ENCODE measurements at regions of chr6 and their contacts with region 1.

Region 1: GRCh38 chr6:27146706-27147505 is 100.6 kb upstream of the PRSS16 start:
- DNase-seq: peak; percentile 99
- ATAC-seq: peak; percentile 71
- H3K4me3 ChIP-seq: peak overlapping the region; percentile 69 to 70
- H3K27ac ChIP-seq: peak overlapping the region; percentile 97
- H3K4me1 ChIP-seq: peaks cover 26 to 55% of the 10 kb centered on the region in 2 experiments
- H3K27me3 ChIP-seq: no peaks in the 10 kb centered on the region
- CTCF ChIP-seq: no peak
- POLR2A ChIP-seq: peak; percentile 93
- RAD21 ChIP-seq: no peak

Region 2: GRCh38 chr6:26183581-26184366 is 963.1 kb before region 1 on chr6:
- CTCF ChIA-PET with region 1: no interaction called
- POLR2A ChIA-PET with region 1: interaction called, 13 read pairs
- RAD21 ChIA-PET with region 1: no interaction called
- intact Hi-C with region 1: no loop called
- DNase-seq: no peak
- ATAC-seq: no peak
- H3K4me3 ChIP-seq: no peak overlapping the region
- H3K27ac ChIP-seq: no peak overlapping the region
- H3K4me1 ChIP-seq: peaks cover 3 to 14% of the 10 kb centered on the region in 2 experiments; a peak in 3 of 4 replicates
- H3K27me3 ChIP-seq: no peaks in the 10 kb centered on the region
- CTCF ChIP-seq: no peak
- POLR2A ChIP-seq: no peak
- RAD21 ChIP-seq: no peak

Region 3: DNA sequence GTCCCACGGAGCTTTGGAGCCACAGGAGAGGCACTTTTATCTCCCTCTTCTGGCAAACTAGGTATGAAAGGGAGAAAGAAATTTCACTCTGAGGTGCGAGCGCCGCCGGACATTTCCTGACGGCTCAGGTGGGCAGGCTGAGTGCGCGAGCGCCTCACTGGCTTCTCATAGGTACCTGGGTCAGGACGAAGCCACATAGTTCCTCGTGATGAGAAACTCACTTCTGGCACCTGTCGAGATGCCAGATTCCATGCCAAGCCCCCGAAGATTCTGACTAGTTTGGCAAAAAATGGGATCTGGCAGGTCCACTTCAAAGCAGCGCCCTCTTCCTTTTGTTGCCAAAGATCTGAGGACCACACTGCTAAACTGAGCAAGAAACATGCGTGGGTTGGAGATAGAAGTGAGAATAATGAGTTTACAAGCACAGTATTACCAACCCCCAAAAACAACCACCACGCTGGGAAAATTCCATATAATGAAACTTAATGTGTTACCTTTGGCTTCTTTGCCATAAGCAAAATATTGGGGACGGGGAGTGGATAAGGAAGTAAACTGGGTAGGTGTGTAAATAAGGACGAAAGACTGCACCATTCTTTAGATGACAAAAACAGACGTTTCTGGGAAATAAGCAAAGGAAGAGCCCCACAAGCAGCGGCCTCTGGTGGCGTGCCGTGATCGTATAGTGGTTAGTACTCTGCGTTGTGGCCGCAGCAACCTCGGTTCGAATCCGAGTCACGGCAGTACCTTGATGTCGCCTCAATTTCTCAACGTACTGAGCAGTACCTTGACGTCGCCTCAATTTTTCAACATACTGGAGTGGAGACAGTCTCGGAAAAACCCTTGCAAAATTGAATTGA is 10.8 kb after region 1 on chr6:
- CTCF ChIA-PET with region 1: interaction called, 3 read pairs
- POLR2A ChIA-PET with region 1: interaction called, 10 read pairs
- RAD21 ChIA-PET with region 1: no interaction called
- intact Hi-C with region 1: no loop called
- DNase-seq: peak; percentile 65
- ATAC-seq: peak; percentile 87
- H3K4me3 ChIP-seq: peak overlapping the region; percentile 39 to 52
- H3K27ac ChIP-seq: peak overlapping the region; percentile 57
- H3K4me1 ChIP-seq: peaks cover 4 to 41% of the 10 kb centered on the region in 2 experiments; a peak in 3 of 4 replicates
- H3K27me3 ChIP-seq: no peaks in the 10 kb centered on the region
- CTCF ChIP-seq: peak; percentile 44 to 59 (median 56); a peak in 5 of 6 replicates
- POLR2A ChIP-seq: no peak
- RAD21 ChIP-seq: peak; percentile 49

Region 4: GRCh38 chr6:27809939-27810767 is 663.2 kb after region 1 on chr6:
- CTCF ChIA-PET with region 1: no interaction called
- POLR2A ChIA-PET with region 1: interaction called, 155 read pairs
- RAD21 ChIA-PET with region 1: no interaction called
- intact Hi-C with region 1: loop called (anchors 5 kb)
- DNase-seq: peak; percentile 97
- ATAC-seq: peak; percentile 43
- H3K4me3 ChIP-seq: peak overlapping the region; percentile 59 to 69
- H3K27ac ChIP-seq: peak overlapping the region; percentile 88
- H3K4me1 ChIP-seq: peaks cover 36 to 64% of the 10 kb centered on the region in 2 experiments
- H3K27me3 ChIP-seq: no peaks in the 10 kb centered on the region
- CTCF ChIP-seq: no peak
- POLR2A ChIP-seq: peak; percentile 92
- RAD21 ChIP-seq: no peak

Region 5: DNA sequence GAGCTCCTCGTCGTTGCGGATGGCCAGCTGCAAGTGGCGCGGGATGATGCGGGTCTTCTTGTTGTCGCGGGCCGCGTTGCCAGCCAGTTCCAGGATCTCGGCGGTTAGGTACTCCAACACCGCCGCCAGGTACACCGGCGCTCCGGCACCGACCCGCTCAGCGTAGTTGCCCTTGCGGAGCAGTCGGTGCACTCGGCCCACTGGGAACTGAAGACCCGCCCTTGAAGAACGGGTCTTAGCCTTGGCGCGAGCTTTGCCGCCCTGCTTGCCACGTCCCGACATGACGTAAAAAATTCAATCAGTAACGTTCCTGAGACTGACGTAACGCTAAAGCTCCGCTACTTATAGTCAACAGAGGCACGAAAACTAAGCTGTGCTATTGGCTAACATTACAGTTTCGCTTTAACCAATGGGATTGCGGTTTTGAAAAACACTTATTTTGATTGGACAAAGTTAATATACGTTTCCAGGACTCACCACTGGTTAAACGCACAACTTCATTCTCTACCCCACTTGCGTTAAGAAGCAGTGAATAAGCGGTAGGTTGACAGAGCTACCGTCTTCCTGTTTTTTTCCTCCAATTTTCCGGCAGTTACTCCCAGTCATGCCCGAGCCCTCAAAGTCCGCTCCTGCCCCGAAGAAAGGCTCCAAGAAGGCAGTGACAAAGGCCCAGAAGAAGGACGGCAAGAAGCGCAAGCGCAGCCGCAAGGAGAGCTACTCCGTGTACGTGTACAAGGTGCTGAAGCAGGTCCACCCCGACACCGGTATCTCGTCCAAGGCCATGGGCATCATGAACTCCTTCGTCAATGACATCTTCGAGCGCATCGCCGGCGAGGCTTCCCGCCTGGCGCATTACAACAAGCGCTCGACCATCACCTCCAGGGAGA is 691.4 kb after region 1 on chr6:
- CTCF ChIA-PET with region 1: no interaction called
- POLR2A ChIA-PET with region 1: interaction called, 39 read pairs
- RAD21 ChIA-PET with region 1: no interaction called
- intact Hi-C with region 1: no loop called
- DNase-seq: peak; percentile 100
- ATAC-seq: peak; percentile 75
- H3K4me3 ChIP-seq: peak overlapping the region; percentile 65 to 78
- H3K27ac ChIP-seq: peak overlapping the region; percentile 98
- H3K4me1 ChIP-seq: peaks cover 23 to 36% of the 10 kb centered on the region in 2 experiments
- H3K27me3 ChIP-seq: no peaks in the 10 kb centered on the region
- CTCF ChIP-seq: no peak
- POLR2A ChIP-seq: peak; percentile 96
- RAD21 ChIP-seq: no peak

Measured in HCT116 (cell line).